ENCODE measurements at regions of chr7 and their contacts with region 1.

Region 1: GRCh38 chr7:101138213-101138870 is 11.4 kb downstream of the SERPINE1 start:
- DNase-seq: peak; percentile 99
- H3K4me3 ChIP-seq: no peak overlapping the region
- H3K27ac ChIP-seq: peak overlapping the region; percentile 30
- H3K4me1 ChIP-seq: peaks cover 39% of the 10 kb centered on the region
- H3K27me3 ChIP-seq: no peaks in the 10 kb centered on the region
- CTCF ChIP-seq: peak; percentile 64 to 75
- POLR2A ChIP-seq: peak; percentile 82

Region 2: GRCh38 chr7:101077303-101078089 is 60.8 kb before region 1 on chr7:
- CTCF ChIA-PET with region 1: interaction called, 12 read pairs
- POLR2A ChIA-PET with region 1: interaction called, 3 read pairs
- dilution Hi-C with region 1: no loop called
- intact Hi-C with region 1: no loop called
- DNase-seq: peak; percentile 70
- H3K4me3 ChIP-seq: no peak overlapping the region
- H3K27ac ChIP-seq: no peak overlapping the region
- H3K4me1 ChIP-seq: no peaks in the 10 kb centered on the region
- H3K27me3 ChIP-seq: peaks cover under 1 to 4% of the 10 kb centered on the region in 2 experiments
- CTCF ChIP-seq: peak; percentile 88 to 94
- POLR2A ChIP-seq: no peak

Region 3: GRCh38 chr7:101099969-101100781 is 38.2 kb before region 1 on chr7:
- CTCF ChIA-PET with region 1: interaction called, 21 read pairs
- POLR2A ChIA-PET with region 1: interaction called, 26 read pairs
- dilution Hi-C with region 1: no loop called
- intact Hi-C with region 1: no loop called
- DNase-seq: peak; percentile 97
- H3K4me3 ChIP-seq: no peak overlapping the region
- H3K27ac ChIP-seq: peak overlapping the region; percentile 89
- H3K4me1 ChIP-seq: peaks cover 43% of the 10 kb centered on the region
- H3K27me3 ChIP-seq: no peaks in the 10 kb centered on the region
- CTCF ChIP-seq: no peak
- POLR2A ChIP-seq: peak; percentile 89

Region 4: DNA sequence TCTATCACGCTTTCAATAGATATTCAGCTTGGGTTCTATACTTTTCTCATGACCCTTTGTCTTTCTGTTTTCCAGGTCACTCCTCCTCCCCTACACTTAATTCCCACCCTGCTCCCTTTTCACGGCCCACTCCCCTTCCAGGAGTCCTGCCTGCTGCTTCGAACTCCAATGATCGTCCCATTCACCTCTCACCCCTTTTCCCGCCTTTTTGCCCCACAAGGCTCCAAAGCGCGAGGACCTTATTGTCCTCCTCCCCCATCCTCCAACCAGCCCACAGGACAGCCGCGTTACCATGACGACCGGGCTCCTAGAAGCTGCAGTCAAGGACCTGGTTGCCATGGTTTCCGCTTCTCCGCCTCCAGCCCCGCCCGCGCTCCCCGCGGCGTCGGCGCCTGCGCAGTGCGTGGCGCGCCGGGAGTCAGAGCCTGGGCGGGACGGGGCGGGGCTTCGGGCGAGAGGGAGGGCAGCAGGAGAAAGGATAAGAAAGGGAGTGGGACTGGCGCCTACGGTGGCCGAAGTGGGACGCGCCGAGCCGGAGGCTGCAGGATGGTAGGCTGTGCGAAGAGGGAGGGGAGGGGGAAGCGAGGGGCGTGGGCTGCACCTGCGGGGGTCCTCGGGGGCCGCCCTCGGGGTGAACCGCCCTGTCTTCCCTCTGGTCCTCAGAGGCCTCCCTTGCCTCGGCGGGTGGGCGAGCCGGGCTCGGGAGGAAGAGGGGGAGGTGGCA is 15.8 kb after region 1 on chr7 and contains the start of gene AP1S1:
- CTCF ChIA-PET with region 1: interaction called, 75 read pairs
- POLR2A ChIA-PET with region 1: no interaction called
- dilution Hi-C with region 1: no loop called
- intact Hi-C with region 1: no loop called
- DNase-seq: peak; percentile 95
- H3K4me3 ChIP-seq: peak within 1 kb of the TSS; percentile 61 to 84 (median 63)
- H3K27ac ChIP-seq: no peak within 1 kb of the TSS
- H3K4me1 ChIP-seq: peaks cover 6% of the 10 kb centered on the region
- H3K27me3 ChIP-seq: peaks cover 0 to 4% of the 10 kb centered on the region in 2 experiments
- CTCF ChIP-seq: no peak
- POLR2A ChIP-seq: no peak
- total RNA-seq, gene AP1S1: 70.9 and 93.3 TPM in 2 replicates

Region 5: GRCh38 chr7:101195884-101196283 is 57.5 kb after region 1 on chr7:
- CTCF ChIA-PET with region 1: interaction called, 266 read pairs
- POLR2A ChIA-PET with region 1: no interaction called
- dilution Hi-C with region 1: no loop called
- intact Hi-C with region 1: no loop called
- DNase-seq: no peak
- H3K4me3 ChIP-seq: no peak overlapping the region
- H3K27ac ChIP-seq: no peak overlapping the region
- H3K4me1 ChIP-seq: no peaks in the 10 kb centered on the region
- H3K27me3 ChIP-seq: peaks cover 6 to 7% of the 10 kb centered on the region in 2 experiments
- CTCF ChIP-seq: no peak
- POLR2A ChIP-seq: no peak

Region 6: DNA sequence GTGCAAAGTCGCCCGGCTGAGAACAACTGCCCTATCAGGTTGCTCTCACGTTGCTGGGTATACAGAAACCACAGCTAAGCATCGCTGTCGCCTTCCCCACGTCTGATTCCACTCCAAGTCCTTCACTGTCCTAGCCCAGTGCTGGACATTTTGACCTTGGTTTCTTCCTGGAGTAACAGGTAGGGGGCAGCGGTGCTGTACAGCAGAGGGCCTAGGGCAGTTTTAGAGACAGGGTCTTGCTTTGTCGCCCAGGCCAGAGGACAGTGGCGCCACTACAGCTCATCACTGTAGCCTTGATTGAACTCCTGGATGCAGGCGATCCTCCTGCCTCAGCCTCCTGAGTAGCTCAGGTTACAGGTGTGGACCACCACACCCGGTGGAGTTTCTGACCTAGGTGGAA is 96.7 kb after region 1 on chr7:
- CTCF ChIA-PET with region 1: no interaction called
- POLR2A ChIA-PET with region 1: no interaction called
- dilution Hi-C with region 1: no loop called
- intact Hi-C with region 1: no loop called
- DNase-seq: peak; percentile 27
- H3K4me3 ChIP-seq: no peak overlapping the region
- H3K27ac ChIP-seq: no peak overlapping the region
- H3K4me1 ChIP-seq: peaks cover 38% of the 10 kb centered on the region
- H3K27me3 ChIP-seq: no peaks in the 10 kb centered on the region
- CTCF ChIP-seq: peak; percentile 20 to 50
- POLR2A ChIP-seq: no peak

Region 7: DNA sequence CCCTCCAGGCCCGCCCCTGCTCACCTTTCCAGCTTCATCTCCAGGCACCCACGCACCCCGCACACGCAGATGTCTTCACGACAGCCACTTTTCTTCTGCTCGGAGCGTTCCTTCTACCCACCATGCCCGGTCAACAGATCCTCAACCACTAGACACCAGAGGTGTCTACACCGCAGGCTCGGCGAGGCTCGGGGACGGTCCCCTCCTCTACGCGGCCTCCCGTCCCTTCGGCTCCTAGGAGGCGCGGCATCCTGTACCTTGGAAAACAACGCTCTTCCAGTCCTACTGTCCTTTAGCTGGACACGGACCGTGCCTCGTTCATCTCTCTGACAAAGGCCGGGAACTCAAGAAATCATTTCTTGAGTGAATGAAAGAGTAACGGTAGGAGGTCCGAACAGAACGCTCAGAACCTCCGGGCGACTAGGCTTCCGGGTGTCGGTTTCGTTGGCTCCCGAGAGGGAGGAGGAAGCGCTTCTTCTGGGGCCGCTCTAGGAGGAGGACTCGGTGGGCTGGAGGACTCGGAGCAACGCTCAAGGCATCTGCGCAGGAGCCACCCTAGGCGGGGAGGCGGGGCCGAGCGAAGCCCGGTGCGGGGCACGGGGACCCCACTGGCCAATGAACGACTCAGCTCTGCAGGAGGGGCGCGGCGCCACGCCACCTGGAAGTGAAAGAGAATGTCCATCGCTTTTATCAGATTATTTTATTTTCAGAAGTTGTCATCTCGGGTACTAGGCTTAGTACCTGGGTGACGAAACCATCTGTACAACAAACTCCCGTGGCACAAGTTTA is 113.7 kb after region 1 on chr7:
- CTCF ChIA-PET with region 1: interaction called, 16 read pairs
- POLR2A ChIA-PET with region 1: no interaction called
- dilution Hi-C with region 1: no loop called
- intact Hi-C with region 1: no loop called
- DNase-seq: peak; percentile 99
- H3K4me3 ChIP-seq: peak overlapping the region; percentile 67 to 98 (median 89)
- H3K27ac ChIP-seq: peak overlapping the region; percentile 52
- H3K4me1 ChIP-seq: peaks cover 4% of the 10 kb centered on the region
- H3K27me3 ChIP-seq: no peaks in the 10 kb centered on the region
- CTCF ChIP-seq: no peak
- POLR2A ChIP-seq: peak; percentile 76

Region 8: GRCh38 chr7:101299511-101300464 is 161.4 kb after region 1 on chr7:
- CTCF ChIA-PET with region 1: interaction called, 10 read pairs
- POLR2A ChIA-PET with region 1: no interaction called
- dilution Hi-C with region 1: no loop called
- intact Hi-C with region 1: no loop called
- DNase-seq: no peak
- H3K4me3 ChIP-seq: no peak overlapping the region
- H3K27ac ChIP-seq: no peak overlapping the region
- H3K4me1 ChIP-seq: peaks cover 2% of the 10 kb centered on the region
- H3K27me3 ChIP-seq: peaks cover 51 to 65% of the 10 kb centered on the region in 2 experiments
- CTCF ChIP-seq: no peak
- POLR2A ChIP-seq: no peak

Measured in endothelial cell of umbilical vein (primary cell).